ENCODE measurements at regions of chr6 and their contacts with region 1.

Region 1: DNA sequence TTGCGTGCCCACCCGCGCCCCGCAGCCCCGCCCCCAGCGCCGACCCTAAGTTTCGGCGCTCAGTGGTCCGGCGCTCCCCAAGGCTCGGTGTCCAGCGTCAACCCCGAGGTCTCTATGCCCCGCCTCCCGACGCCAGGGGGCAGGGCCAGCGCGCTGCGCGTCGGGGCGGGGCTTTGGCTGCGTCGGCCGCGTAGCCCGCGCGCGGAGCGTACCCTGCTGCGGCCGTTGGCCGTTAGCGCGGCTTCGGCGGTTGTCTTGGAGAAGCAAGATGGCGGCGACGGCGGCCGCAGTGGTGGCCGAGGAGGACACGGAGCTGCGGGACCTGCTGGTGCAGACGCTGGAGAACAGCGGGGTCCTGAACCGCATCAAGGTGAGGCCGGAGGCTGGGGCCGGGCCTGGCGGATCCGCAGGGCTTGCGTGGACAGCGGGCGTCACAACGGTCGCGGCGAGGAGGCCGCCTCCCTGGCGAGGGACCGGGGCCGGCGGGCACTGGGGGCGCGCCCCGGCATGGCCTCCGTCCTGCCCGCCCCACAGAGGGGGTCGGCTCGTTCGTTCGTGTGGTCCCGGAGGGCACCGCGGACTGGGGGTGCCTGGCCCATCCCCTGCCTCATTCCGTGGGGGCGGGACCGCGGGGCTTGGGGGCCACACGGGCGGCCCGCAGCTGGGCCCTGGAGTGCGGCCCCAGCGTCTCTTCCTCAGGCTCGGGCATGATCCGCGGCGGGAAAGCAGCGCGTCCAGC is at the start of gene CEP43:
- DNase-seq: peak; percentile 88
- H3K4me3 Mint-ChIP-seq: peak within 1 kb of the TSS; percentile 90
- H3K27ac Mint-ChIP-seq: peak within 1 kb of the TSS; percentile 80
- H3K4me1 Mint-ChIP-seq: peaks cover 31% of the 10 kb centered on the region
- H3K27me3 Mint-ChIP-seq: no peaks in the 10 kb centered on the region
- total RNA-seq, gene CEP43: 18.8 and 21.4 TPM in 2 replicates

Region 2: DNA sequence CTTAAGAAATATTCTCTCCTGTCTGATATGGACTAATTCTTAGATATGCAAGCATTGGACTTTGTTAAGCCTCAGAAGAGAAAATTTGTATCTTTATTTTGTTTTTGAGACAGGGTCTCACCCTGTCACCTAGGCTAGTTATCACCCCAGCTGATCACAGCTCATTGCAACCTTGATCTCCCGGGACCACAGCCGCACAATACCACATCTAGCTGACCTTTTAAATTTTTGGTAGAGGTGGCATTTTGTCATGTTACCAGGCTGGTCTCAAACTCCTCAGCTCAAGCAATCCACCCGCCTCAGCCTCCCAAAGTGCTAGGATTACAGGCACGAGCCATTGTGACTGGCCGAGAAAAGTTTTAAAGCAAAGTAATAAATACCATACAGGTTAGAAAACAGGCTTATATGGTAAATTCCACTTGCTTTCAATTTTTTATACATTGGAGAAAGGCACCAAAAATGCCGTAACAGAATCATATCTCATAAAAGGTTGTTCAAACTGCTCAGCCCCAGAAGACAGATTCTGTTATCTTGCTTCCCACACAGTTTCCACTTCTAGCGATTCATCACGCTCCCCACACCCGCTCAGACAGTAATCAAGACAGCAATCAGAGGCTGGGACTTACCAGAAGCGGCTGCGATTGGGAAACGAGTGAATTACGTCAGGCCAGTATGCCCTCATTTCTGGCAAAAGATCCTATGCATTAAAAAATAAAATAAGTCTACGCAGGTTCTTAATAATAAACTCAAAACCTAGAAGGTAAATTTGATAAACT is 56.7 kb before region 1 on chr6:
- intact Hi-C with region 1: loop called (anchors 2 kb)
- DNase-seq: peak; percentile 55
- H3K4me3 Mint-ChIP-seq: peak overlapping the region; percentile 50
- H3K27ac Mint-ChIP-seq: peak overlapping the region; percentile 90
- H3K4me1 Mint-ChIP-seq: peaks cover 45% of the 10 kb centered on the region
- H3K27me3 Mint-ChIP-seq: no peaks in the 10 kb centered on the region

Region 3: DNA sequence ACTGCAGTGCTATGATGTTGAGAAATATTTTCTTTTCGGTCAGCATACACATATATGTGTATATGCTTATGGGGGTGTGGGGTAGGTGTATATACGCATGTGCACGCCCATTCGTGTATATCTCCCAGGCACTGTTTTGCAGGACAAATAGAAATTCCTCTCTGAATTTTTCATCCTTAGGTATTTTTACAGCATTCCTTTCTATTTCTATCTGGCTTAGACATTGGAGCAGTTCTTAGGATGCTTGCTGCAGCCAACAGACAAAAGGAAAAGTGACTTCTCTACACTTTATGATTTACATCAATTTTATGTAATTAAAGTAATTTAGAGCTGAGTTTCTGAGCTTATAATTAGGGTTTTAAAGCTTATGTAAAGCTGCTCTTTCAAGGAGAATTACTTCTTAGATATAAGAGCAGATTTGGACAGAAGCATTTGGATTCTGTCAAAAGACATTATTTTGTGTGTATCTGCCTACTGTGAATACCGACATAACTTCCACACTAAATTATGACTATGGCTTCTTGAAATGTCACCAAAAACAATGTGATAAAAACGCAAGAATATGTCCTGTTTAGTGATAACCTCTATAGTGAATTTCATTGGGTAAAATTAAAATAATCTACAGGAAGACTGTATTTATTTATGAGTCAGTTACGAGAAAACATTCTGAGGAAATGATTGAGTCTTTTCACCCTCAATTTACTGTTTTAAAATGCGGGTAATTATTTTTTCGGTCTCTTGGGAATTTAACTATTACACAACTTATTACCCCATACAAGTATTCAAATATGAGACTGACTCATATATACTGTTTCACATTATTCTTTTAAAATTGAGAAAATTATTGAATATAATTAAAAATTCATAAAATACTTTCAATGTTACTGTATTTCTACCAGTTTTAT is 21.4 kb before region 1 on chr6:
- intact Hi-C with region 1: no loop called
- DNase-seq: no peak
- H3K4me3 Mint-ChIP-seq: no peak overlapping the region
- H3K27ac Mint-ChIP-seq: no peak overlapping the region
- H3K4me1 Mint-ChIP-seq: peaks cover 20% of the 10 kb centered on the region
- H3K27me3 Mint-ChIP-seq: no peaks in the 10 kb centered on the region

Region 4: DNA sequence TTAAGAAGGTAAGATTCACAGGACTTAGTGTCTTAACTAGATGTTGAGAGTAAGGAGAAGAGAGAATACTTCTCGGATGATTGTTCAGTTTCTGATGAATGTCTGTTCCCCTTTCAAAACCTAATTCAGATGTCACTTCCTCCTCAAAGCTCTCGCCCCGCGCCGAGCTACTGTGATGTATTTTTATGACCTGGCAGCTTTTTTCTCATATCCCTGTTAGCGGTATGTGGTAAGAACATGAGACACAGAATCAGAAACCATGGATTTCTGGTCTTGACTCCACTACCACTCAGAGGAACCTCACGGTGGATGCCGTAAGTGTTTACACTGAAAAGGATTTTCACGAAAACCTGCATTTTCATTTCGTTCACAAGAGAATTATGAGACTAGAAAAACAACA is 48.2 kb after region 1 on chr6:
- intact Hi-C with region 1: loop called (anchors 1 kb)
- DNase-seq: peak; percentile 29
- H3K4me3 Mint-ChIP-seq: peak overlapping the region; percentile 19
- H3K27ac Mint-ChIP-seq: peak overlapping the region; percentile 33
- H3K4me1 Mint-ChIP-seq: peaks cover 21% of the 10 kb centered on the region
- H3K27me3 Mint-ChIP-seq: no peaks in the 10 kb centered on the region

Region 5: GRCh38 chr6:167141667-167142432 is 142.5 kb after region 1 on chr6:
- intact Hi-C with region 1: loop called (anchors 5 kb)
- DNase-seq: peak; percentile 8
- H3K4me3 Mint-ChIP-seq: no peak overlapping the region
- H3K27ac Mint-ChIP-seq: no peak overlapping the region
- H3K4me1 Mint-ChIP-seq: no peaks in the 10 kb centered on the region
- H3K27me3 Mint-ChIP-seq: peaks cover 6% of the 10 kb centered on the region

Region 6: DNA sequence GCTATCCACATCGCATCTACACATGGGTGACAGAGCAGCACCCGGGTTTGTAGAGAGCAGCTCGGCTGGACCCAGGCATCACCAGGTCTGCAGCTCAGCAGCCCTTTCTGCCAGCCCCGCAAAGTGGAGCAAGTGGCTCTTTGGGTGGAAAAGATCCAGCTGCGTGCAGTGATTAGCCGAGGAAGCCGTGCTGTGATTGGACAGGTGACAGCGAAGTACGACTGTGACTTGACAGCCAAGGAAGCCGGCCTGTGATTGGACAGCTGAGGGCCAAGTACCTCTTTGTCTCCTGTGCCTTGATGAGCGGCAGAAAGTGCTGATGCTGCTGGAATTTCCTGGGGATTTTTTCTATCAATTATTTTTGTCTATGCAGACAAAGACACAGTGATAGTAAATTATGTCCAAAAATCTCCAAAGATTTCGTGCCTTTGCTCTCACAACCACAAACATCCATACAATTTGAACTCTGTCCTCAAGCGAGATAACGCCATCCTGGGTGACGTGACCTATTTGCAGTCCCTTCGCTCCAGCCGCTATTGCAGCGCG is 220.7 kb after region 1 on chr6:
- intact Hi-C with region 1: no loop called
- DNase-seq: no peak
- H3K4me3 Mint-ChIP-seq: no peak overlapping the region
- H3K27ac Mint-ChIP-seq: no peak overlapping the region
- H3K4me1 Mint-ChIP-seq: no peaks in the 10 kb centered on the region
- H3K27me3 Mint-ChIP-seq: peaks cover 8% of the 10 kb centered on the region

Measured in activated T-helper 1 cell treated with anti-CD3 and anti-CD28 coated beads, Interleukin-12 subunit alpha, Interleukin-12 subunit beta, Interleukin-2, Interleukin-4 antibody, amounts not matched to agents 30 ng/mL and 10 ng/mL and 1 ng/mL, durations not matched to agents 14 hours and 24 hours and 36 hours (primary cell).